Ascending aorta (tissue), 2 donors: ENCODE measurements at regions of chr17 and their contacts with region 1.

Region 1: GRCh38 chr17:49031965-49032928 is 35.1 kb downstream of the IGF2BP1 start:
- DNase-seq: no peak
- H3K4me3 ChIP-seq: no peak overlapping the region
- H3K27ac ChIP-seq: no peak overlapping the region
- H3K4me1 ChIP-seq: no peaks in the 10 kb centered on the region
- H3K27me3 ChIP-seq: no peaks in the 10 kb centered on the region
- CTCF ChIP-seq: peak; percentile 55 to 77 (median 72)

Region 2: DNA sequence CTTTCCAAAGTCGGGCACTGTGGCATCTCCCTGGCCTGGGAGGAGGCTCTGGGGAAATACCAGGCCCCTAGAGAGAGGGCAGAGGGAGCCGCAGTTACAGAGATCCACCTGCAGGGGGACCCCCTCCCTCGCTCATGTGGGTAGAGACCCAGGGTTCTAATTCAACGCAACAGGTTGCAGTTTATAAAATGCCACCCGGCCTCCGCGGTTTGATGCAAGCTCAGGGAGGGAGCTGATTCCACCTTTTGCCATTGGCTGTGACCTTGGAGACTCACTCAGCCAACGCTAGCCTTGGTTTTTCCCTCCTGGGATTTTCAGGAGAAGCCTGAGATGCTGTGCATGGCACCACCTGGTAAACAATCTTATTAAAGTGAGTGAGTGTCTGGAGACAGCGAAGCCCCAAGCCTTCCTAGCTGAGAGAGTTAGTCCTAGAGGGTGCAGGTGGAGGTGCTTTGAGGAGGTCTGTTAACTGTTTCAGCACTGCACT is 227.3 kb before region 1 on chr17:
- intact Hi-C with region 1: loop called (anchors 10 kb)
- DNase-seq: peak in 1 of 2 donors; percentile 70
- H3K4me3 ChIP-seq: no peak overlapping the region
- H3K27ac ChIP-seq: no peak overlapping the region
- H3K4me1 ChIP-seq: no peaks in the 10 kb centered on the region
- H3K27me3 ChIP-seq: no peaks in the 10 kb centered on the region
- CTCF ChIP-seq: peak; percentile 84 to 94 (median 88)

Region 3: DNA sequence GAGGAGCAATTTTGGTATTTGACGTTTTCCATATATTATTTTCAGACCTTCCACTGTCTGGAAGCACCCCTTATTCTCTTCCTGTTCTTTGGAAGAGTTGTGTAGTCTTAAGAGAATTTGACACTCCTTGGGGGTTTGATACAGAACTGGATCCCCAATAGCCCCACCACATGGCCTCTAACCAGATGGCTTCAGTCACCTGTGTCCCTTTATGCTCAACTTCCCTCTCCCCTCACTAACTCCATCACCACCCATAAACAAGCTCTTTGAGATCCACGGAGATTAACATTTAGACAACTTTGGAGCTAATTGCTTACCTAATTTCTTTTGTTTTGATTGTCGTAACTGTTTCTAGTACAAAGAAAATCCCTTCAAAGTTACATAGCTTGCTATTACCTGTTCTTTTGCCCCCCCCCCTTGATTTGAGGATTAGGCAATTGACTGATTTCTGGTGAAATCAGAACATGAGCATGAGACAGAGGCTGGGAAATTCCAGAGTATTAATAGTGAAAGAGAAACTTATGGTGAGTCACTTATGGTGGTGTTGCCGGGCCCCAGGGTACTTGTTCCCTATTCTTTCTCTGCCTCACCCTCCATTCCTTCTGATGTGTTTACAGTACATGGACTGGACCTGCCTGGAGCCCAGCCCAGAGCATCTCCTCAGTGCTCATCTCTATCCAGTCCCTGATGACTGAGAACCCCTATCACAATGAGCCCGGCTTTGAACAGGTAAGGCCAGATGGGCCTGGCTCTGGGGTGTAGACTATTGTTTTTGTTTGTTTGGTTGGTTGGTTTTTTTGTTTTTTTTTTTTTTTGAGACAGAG is 116.6 kb before region 1 on chr17:
- intact Hi-C with region 1: no loop called
- DNase-seq: no peak
- H3K4me3 ChIP-seq: no peak overlapping the region
- H3K27ac ChIP-seq: peak overlapping the region; percentile 3 to 28
- H3K4me1 ChIP-seq: peaks cover 4 to 8% of the 10 kb centered on the region in 2 donors
- H3K27me3 ChIP-seq: no peaks in the 10 kb centered on the region
- CTCF ChIP-seq: no peak

Region 4: DNA sequence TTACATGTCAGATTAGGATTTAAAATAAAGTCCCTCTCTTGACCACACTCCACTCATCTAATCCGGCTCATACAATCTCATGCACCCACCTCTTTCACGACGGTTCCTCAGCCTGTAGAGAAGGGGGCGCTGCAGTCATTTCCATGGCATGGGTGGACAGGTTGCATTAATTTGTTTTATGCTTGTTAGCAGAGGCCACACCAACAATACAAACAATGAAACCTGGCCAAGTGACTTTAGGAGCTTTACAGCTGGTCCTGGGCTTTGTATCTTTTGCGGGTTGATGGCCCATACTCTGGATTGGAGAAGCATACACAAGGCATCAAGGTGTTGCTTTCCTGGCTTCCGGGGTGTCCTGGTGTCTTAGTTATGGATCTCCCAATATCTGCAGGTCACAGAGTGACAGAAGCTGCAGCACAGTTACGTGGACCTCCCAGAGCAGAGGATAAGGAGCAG is 77.9 kb before region 1 on chr17:
- intact Hi-C with region 1: loop called (anchors 10 kb)
- DNase-seq: no peak
- H3K4me3 ChIP-seq: no peak overlapping the region
- H3K27ac ChIP-seq: no peak overlapping the region
- H3K4me1 ChIP-seq: no peaks in the 10 kb centered on the region
- H3K27me3 ChIP-seq: no peaks in the 10 kb centered on the region
- CTCF ChIP-seq: peak in 1 of 3 experiments; percentile 5

Region 5: DNA sequence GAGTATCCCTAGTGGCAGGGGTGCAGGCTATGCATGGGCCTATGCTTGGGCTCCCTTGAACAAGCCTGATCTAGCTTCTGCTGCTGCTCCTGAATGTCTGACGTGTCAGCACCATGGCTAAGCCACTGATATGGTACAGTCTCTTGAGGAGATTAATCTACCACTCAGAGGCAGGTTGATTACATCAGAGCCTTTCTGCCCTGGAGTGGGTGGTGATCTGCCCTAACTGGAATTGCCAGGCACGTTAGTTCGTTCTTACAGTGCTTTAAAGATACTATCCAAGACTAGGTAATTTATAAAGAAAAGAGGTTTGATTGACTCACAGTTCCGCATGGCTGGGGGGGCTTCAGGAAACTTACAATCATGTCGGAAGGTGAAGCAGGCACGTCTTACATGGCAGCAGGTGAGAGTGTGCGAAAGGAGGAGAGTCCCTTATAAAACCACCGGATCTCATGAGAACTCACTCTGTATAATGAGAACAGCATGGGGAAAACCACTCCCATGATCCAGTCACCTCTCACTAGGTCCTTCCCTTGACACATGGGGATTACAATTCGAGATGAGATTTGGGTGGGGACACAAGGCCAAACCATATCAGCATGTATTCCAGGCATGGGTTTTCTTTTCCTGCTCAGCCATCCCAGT is 58.8 kb after region 1 on chr17:
- intact Hi-C with region 1: no loop called
- DNase-seq: no peak
- H3K4me3 ChIP-seq: no peak overlapping the region
- H3K27ac ChIP-seq: no peak overlapping the region
- H3K4me1 ChIP-seq: no peaks in the 10 kb centered on the region
- H3K27me3 ChIP-seq: no peaks in the 10 kb centered on the region
- CTCF ChIP-seq: no peak

Region 6: DNA sequence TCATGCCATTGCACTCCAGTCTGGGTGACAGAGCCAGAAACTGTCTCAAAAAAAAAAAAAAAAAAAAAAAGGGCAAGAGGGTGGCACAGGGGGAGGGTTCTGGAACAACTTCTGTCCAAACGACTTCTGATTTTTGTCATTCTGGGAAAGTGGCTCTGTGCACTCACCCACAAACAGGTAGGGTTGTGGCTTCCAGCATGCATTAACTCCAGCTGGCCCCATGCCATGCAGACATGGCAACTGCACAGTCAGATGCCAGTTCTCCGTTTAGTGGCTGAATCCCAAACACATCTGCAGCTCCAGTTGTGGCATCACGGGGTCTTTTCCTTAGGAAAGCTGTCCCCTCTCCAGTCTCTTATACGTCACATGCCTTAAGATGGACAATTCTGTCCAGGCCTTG is 130.6 kb after region 1 on chr17:
- intact Hi-C with region 1: no loop called
- DNase-seq: no peak
- H3K4me3 ChIP-seq: no peak overlapping the region
- H3K27ac ChIP-seq: no peak overlapping the region
- H3K4me1 ChIP-seq: no peaks in the 10 kb centered on the region
- H3K27me3 ChIP-seq: no peaks in the 10 kb centered on the region
- CTCF ChIP-seq: no peak